Prostate gland (tissue), 2 donors: ENCODE measurements at regions of chr5 and their contacts with region 1.

Region 1: DNA sequence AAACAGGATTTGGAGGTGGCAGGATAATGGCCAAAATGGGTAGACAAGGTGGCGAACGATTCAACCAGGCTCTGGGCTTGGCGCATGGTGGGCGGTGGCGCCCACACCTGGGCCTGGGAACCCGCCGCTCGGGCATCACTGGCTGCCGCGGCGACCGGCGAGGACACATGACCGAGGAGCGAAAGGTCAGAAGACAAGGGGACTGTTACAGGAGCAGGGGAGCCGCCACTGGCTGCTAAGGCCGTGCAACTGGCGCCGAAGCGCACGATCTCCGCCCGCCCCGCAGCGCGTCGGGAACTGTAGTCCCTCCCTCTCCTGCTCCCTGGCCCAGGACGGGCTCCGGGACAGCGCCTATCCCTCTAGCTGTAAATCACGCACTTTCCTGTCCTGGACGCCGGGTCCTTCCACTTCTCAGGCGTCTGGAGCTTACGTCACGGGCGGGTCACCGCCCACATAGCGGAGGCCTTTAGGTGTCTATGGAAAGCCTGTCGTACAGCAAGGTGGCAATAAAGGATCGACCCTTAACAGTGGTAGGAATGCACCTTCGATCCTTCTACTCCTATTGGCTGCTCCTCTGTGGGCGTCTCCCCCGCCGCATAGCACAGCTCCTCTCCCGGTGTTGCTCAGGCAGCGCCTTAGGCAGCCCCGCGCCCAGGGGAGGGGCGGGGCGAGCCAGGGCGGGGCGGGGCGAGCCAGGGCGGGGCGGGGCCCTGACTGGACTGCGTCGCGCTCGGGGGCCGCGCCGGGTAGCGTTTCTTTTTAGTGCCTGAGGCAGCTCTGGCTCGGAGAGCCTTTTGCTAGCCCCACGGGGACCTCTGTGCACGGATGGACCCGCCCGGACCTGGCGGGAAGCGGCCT is at the start of gene ICE1:
- DNase-seq: peak; percentile 97
- H3K4me3 ChIP-seq: peak within 1 kb of the TSS; percentile 96 to 98
- H3K27ac ChIP-seq: peak within 1 kb of the TSS; percentile 96 to 98
- H3K4me1 ChIP-seq: peaks cover 5% of the 10 kb centered on the region
- H3K27me3 ChIP-seq: no peaks in the 10 kb centered on the region
- CTCF ChIP-seq: no peak
- POLR2A ChIP-seq: peak; percentile 68
- total RNA-seq, gene ICE1: 21.0 to 25.9 TPM

Region 2: DNA sequence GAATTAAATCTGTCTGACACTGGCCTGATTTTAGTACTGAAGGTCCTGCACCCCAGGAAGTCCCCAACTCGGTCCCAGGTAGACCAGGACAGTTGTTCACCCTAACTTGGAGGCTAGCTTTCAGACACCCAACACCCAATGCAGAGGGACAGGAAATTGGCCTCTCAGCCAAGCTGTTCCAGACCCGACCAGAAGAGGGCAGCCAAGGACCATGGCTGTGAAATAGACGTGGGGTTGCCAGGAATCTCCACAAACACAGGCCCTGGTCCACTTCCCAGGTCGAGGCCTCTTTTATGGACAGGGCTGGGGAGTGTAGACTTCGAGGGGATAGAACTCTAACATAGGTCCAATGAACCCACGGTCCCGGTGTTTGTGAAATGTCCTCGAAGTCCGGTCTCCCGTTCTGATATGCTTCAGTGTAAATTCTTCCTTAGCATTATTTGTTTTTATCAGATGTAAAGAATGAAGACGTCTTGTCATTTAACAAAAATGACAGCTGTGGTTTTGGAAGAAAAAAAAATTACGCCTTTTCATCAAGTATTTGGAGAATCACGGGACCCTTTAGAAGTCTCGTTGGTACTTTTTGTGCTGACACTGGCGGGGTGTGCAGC is 542.4 kb before region 1 on chr5:
- intact Hi-C with region 1: loop called (anchors 5 kb)
- DNase-seq: peak; percentile 70
- H3K4me3 ChIP-seq: no peak overlapping the region
- H3K27ac ChIP-seq: no peak overlapping the region
- H3K4me1 ChIP-seq: no peaks in the 10 kb centered on the region
- H3K27me3 ChIP-seq: no peaks in the 10 kb centered on the region
- CTCF ChIP-seq: peak; percentile 72 to 90 (median 88)
- POLR2A ChIP-seq: no peak

Region 3: DNA sequence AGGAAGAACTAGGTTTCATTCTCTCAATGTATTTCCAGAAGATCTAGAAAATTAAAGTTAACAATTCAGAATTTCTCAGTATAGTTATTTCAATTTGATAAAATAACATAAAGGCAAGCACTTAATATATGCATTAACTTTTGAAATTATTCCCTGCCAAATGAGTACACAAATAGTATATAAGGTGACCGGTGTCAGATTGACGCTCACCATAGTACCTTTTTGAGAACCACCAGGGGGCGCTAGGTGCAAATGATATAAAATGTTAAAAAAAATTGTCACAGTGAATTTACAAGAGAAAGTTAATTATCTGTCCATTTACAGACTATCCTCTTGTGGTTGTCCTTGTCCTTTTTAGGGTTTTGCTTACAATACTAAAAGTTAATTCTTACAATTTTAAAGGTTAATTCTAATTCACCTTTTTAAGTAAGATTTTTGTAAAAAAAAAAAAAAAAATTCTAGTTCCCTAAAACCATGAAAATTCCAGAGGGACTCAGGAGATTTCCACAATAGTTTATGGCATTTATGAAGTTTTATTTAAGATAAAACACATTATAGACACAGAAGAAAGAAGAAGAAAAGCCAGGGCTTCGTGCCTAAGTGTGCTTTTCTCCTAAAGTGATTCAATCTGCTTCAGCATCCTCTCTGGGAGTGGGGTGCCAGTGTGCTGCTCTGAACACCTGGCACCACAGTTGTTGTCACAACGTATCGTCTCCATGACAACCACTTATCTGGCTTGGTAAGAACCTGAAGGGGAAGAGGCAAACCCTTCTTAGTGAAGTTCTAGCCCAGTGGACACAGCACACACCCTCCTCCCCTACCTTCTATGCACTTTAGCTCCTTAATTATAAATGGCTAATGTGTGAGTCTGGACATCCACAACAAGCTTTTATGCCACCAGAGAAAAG is 280.3 kb before region 1 on chr5:
- intact Hi-C with region 1: loop called (anchors 2 kb)
- DNase-seq: peak; percentile 73
- H3K4me3 ChIP-seq: no peak overlapping the region
- H3K27ac ChIP-seq: no peak overlapping the region
- H3K4me1 ChIP-seq: peaks cover 2% of the 10 kb centered on the region
- H3K27me3 ChIP-seq: peaks cover 15% of the 10 kb centered on the region
- CTCF ChIP-seq: peak; percentile 51 to 91 (median 80)
- POLR2A ChIP-seq: no peak

Region 4: GRCh38 chr5:5979377-5980079 is 557.3 kb after region 1 on chr5:
- intact Hi-C with region 1: no loop called
- DNase-seq: no peak
- H3K4me3 ChIP-seq: no peak overlapping the region
- H3K27ac ChIP-seq: peak overlapping the region in 1 of 2 donors; percentile 43
- H3K4me1 ChIP-seq: no peaks in the 10 kb centered on the region
- H3K27me3 ChIP-seq: no peaks in the 10 kb centered on the region
- CTCF ChIP-seq: no peak
- POLR2A ChIP-seq: no peak

Region 5: GRCh38 chr5:6632917-6633468 is 1210.8 kb after region 1 on chr5 and contains the starts of genes NSUN2 and SRD5A1:
- intact Hi-C with region 1: loop called (anchors 5 kb)
- DNase-seq: peak; percentile 89
- H3K4me3 ChIP-seq: peak within 1 kb of the TSS; percentile 68 to 84
- H3K27ac ChIP-seq: peak within 1 kb of the TSS; percentile 88 to 93
- H3K4me1 ChIP-seq: peaks cover 7% of the 10 kb centered on the region
- H3K27me3 ChIP-seq: no peaks in the 10 kb centered on the region
- CTCF ChIP-seq: no peak
- POLR2A ChIP-seq: no peak
- total RNA-seq, gene NSUN2: 40.8 to 54.5 TPM
- total RNA-seq, gene SRD5A1: 9.4 to 29.3 TPM